ENCODE measurements at regions of chr15 and their contacts with region 1.

Region 1: GRCh38 chr15:34056936-34057335 is 17.9 kb upstream of the AVEN start:
- DNase-seq: no peak
- H3K4me3 ChIP-seq: no peak overlapping the region
- H3K4me3 Mint-ChIP-seq: no peak overlapping the region
- H3K27ac Mint-ChIP-seq: no peak overlapping the region
- H3K4me1 ChIP-seq: no peaks in the 10 kb centered on the region
- H3K4me1 Mint-ChIP-seq: peaks cover 5% of the 10 kb centered on the region
- H3K27me3 ChIP-seq: no peaks in the 10 kb centered on the region
- H3K27me3 Mint-ChIP-seq: no peaks in the 10 kb centered on the region
- CTCF ChIP-seq: no peak

Region 2: GRCh38 chr15:34101366-34102175 is 44.6 kb after region 1 on chr15 and contains the starts of genes EMC7 and PGBD4:
- CTCF ChIA-PET with region 1: no interaction called
- POLR2A ChIA-PET with region 1: no interaction called
- intact Hi-C with region 1: loop called (anchors 2 kb)
- DNase-seq: peak; percentile 98
- H3K4me3 ChIP-seq: peak within 1 kb of the TSS; percentile 92
- H3K4me3 Mint-ChIP-seq: peak within 1 kb of the TSS; percentile 100
- H3K27ac Mint-ChIP-seq: peak within 1 kb of the TSS; percentile 99
- H3K4me1 ChIP-seq: peaks cover 5% of the 10 kb centered on the region; the same call in 1 of the 2 replicates
- H3K4me1 Mint-ChIP-seq: no peaks in the 10 kb centered on the region
- H3K27me3 ChIP-seq: no peaks in the 10 kb centered on the region
- H3K27me3 Mint-ChIP-seq: no peaks in the 10 kb centered on the region
- CTCF ChIP-seq: no peak
- total RNA-seq, gene EMC7: 70.2 and 74.2 TPM in 2 replicates
- total RNA-seq, gene PGBD4: 1.5 and 1.7 TPM in 2 replicates

Region 3: DNA sequence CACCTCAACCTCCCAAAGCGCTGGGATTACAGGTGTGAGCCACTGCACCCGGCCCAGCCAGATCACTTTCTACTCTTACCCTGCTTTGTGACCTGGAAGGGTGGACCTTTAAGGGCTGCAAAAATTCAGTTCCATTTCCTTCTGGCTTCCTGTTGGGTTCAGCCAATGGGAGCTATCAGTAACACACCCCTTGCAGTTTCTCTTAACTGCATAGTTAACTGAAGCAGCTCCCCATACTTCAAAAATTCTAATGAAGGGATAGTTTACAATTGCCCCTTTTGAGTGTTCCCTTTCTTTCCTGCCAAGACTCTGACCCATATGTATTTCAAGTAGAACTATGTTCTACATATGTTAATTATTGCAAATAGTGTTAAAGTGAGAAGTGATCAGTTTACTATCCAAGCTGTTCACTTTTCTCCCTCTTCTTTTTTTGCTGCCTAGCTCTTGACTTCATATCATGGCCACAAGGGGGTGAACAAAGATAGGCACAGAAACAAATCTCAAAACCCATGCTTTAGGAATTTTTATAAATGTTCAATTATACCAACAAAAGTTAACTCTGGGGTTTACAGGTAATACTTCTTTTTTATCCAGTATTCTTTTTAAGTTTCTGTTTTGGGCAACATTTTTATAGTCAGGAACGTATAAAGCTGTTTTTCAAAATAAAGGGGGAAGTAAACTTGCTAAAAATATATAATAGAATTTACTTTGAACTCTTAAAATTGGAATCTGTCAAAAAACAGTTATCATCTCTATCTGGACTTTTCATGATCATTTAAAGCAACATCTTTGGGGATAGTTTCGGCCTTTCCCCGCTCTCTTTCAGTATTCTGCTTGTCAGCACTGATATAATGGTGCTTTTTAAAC is 53.1 kb after region 1 on chr15:
- CTCF ChIA-PET with region 1: interaction called, 3 read pairs
- POLR2A ChIA-PET with region 1: no interaction called
- intact Hi-C with region 1: loop called (anchors 1 kb)
- DNase-seq: peak in 1 of 2 experiments; percentile 34
- H3K4me3 ChIP-seq: no peak overlapping the region
- H3K4me3 Mint-ChIP-seq: no peak overlapping the region
- H3K27ac Mint-ChIP-seq: no peak overlapping the region
- H3K4me1 ChIP-seq: no peaks in the 10 kb centered on the region
- H3K4me1 Mint-ChIP-seq: no peaks in the 10 kb centered on the region
- H3K27me3 ChIP-seq: no peaks in the 10 kb centered on the region
- H3K27me3 Mint-ChIP-seq: no peaks in the 10 kb centered on the region
- CTCF ChIP-seq: peak; percentile 40 to 73

Region 4: GRCh38 chr15:34587717-34588674 is 531.1 kb after region 1 on chr15:
- CTCF ChIA-PET with region 1: interaction called, 3 read pairs
- POLR2A ChIA-PET with region 1: no interaction called
- intact Hi-C with region 1: loop called (anchors 1 kb)
- DNase-seq: peak; percentile 52 to 71
- H3K4me3 ChIP-seq: no peak overlapping the region
- H3K4me3 Mint-ChIP-seq: peak overlapping the region; percentile 65
- H3K27ac Mint-ChIP-seq: no peak overlapping the region
- H3K4me1 ChIP-seq: peaks cover 4% of the 10 kb centered on the region; the same call in 1 of the 2 replicates
- H3K4me1 Mint-ChIP-seq: no peaks in the 10 kb centered on the region
- H3K27me3 ChIP-seq: no peaks in the 10 kb centered on the region; the same call in 1 of the 2 replicates
- H3K27me3 Mint-ChIP-seq: peaks cover 19% of the 10 kb centered on the region
- CTCF ChIP-seq: peak; percentile 71 to 74

Measured in Caco-2 (cell line).